Activated B cell treated with CpG ODN at 0.5 μM for 24 hours (primary cell): ENCODE measurements at regions of chr6 and their contacts with region 1.

Region 1: DNA sequence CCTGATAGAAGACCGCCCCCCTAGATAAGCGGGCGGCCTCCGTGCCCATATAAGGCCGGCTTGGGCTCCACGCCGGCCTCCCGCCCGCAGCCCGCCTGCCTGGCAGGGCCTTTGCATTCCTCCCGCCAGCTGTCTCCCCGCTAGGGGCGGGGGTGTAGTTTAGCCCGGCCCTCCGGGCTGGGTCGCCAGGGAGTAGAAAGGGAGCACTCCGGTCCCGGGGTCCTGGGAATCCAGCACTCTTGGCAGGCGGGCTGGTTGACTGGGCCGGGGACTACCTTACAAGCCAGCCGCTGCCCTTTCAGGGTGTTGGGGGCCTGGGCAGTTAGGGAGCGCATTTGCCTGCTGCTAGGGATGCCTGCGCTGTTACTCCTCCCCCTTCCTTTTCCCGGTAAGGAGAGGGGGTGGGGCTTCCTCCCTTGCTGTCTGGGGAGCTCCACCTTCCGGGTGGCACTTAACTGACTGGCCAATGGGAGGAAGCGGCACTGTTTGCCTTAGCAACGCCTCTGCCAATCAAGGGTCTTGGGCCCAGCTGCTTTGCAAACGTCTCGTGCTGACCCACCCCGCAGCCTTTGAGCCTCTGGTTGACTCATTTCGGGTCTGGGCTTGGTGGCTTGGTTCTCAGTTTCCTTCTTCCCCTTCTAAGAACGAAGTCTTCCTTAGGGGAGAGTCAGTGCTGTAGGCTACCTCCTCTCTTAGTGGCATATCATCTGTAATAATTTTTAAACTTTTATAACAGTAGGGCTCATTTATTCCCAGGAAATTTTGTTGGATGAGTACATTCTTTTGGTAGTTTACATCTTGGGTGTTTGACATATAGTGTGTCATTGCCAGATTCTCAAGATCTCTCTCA is 3.4 kb downstream of the SRF start:
- DNase-seq: peak; percentile 77
- ATAC-seq: peak; percentile 71
- H3K4me3 Mint-ChIP-seq: peak overlapping the region; percentile 73
- H3K27ac Mint-ChIP-seq: peak overlapping the region; percentile 90
- H3K4me1 Mint-ChIP-seq: peaks cover 48% of the 10 kb centered on the region
- H3K27me3 Mint-ChIP-seq: no peaks in the 10 kb centered on the region
- CTCF ChIP-seq: no peak

Region 2: GRCh38 chr6:42782622-42783176 is 391.8 kb before region 1 on chr6:
- CTCF ChIA-PET with region 1: no interaction called
- POLR2A ChIA-PET with region 1: no interaction called
- intact Hi-C with region 1: loop called (anchors 5 kb)
- DNase-seq: peak; percentile 62
- ATAC-seq: peak; percentile 40
- H3K4me3 Mint-ChIP-seq: peak overlapping the region; percentile 97
- H3K27ac Mint-ChIP-seq: peak overlapping the region; percentile 100
- H3K4me1 Mint-ChIP-seq: peaks cover 36% of the 10 kb centered on the region
- H3K27me3 Mint-ChIP-seq: no peaks in the 10 kb centered on the region
- CTCF ChIP-seq: no peak

Region 3: GRCh38 chr6:43013843-43014433 is 160.6 kb before region 1 on chr6 and contains the starts of genes KLHDC3 and MEA1:
- CTCF ChIA-PET with region 1: no interaction called
- POLR2A ChIA-PET with region 1: interaction called, 12 read pairs
- intact Hi-C with region 1: loop called (anchors 2 kb)
- DNase-seq: peak; percentile 94
- ATAC-seq: peak; percentile 93
- H3K4me3 Mint-ChIP-seq: peak within 1 kb of the TSS; percentile 97
- H3K27ac Mint-ChIP-seq: peak within 1 kb of the TSS; percentile 89
- H3K4me1 Mint-ChIP-seq: peaks cover 51% of the 10 kb centered on the region
- H3K27me3 Mint-ChIP-seq: no peaks in the 10 kb centered on the region
- CTCF ChIP-seq: no peak
- total RNA-seq, gene KLHDC3: 36.4 and 36.7 TPM in 2 replicates
- total RNA-seq, gene MEA1: 44.4 and 48.3 TPM in 2 replicates

Region 4: DNA sequence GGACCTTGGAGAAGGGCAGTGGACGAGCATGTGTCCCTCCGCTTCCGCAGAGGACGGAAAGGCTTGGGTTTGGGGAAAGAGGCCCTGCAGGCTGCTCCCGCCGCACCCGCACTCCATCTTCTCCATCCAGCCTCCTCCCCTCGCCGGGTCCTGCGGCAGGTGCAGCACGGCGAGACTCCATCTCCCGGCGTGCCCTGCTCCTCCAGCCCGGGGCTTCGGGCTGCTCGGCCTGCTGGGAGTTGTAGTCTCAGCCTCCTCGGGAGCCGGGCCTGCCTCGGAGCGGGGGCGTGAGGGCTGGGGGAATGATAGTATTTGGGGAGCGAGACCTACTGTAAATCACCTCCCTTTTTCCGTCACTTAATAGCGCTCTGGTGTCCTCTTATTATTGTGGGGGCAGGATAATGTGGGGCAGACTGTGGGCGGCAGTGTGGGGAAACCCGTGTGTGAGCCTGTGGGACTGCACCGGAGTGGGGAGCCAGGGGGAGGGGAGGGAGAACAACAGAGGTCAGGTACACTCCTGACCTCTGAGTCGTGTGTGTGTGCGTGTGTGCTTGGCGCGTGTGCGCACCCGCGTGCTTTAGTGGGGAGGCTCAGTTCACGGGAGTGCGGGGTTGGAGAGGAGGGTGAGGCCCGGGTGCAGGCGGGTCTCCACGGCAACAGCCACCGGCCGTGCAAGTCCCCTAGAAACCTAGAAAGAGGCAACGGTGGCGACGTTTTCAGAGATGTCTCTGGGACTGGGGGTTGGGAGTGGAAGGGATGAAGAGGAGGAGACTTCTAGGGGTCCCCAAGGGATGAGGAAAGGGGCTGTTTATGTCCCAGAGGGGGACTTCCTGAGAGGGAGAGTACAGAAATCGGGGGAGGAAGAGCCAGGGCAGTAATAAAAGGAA is 72.9 kb after region 1 on chr6:
- CTCF ChIA-PET with region 1: no interaction called
- POLR2A ChIA-PET with region 1: interaction called, 8 read pairs
- intact Hi-C with region 1: loop called (anchors 1 kb)
- DNase-seq: peak; percentile 73
- ATAC-seq: peak; percentile 96
- H3K4me3 Mint-ChIP-seq: no peak overlapping the region
- H3K27ac Mint-ChIP-seq: peak overlapping the region; percentile 76
- H3K4me1 Mint-ChIP-seq: peaks cover 29% of the 10 kb centered on the region
- H3K27me3 Mint-ChIP-seq: peaks cover 17% of the 10 kb centered on the region
- CTCF ChIP-seq: no peak

Region 5: DNA sequence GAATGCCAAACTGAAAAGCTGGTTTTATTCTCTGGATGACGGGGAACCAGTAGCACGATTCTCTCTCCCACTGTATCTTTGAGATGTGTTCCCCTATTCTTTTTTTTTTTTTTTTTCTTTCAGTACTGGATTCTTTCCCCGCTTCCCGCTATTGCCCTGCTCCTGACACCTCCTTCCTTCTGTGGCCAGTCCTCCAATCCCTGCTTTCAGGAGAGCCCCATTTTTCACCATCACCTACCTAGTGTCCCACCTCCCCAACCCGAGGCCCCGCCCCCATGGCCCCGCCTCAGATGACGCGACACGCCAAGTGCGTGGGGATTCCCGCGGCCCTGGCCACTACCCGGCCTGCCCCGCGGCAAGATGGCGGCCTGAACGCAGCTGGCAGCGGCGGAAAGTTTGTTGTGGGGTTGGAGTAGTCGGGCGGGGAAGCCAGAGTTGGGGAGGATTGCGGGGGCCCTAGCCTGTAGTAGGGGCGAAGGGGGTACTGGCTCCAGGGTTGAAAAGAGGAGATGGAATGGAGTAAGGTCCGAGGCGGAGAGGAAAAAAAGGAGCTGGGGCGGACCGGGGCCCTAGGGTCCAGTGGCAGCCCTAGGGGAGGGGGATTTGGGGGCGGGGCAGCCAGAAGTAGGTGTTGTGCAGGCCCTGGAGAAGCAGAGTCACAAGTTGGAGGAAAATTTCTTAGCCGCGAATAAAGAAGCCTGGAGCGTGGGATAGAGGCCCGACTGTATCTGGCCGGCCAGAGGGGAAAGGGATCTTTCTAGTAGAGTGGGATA is 302.9 kb after region 1 on chr6 and contains the start of gene TJAP1:
- CTCF ChIA-PET with region 1: no interaction called
- POLR2A ChIA-PET with region 1: interaction called, 6 read pairs
- intact Hi-C with region 1: loop called (anchors 2 kb)
- DNase-seq: peak; percentile 98
- ATAC-seq: peak; percentile 100
- H3K4me3 Mint-ChIP-seq: peak within 1 kb of the TSS; percentile 96
- H3K27ac Mint-ChIP-seq: peak within 1 kb of the TSS; percentile 94
- H3K4me1 Mint-ChIP-seq: peaks cover 41% of the 10 kb centered on the region
- H3K27me3 Mint-ChIP-seq: no peaks in the 10 kb centered on the region
- CTCF ChIP-seq: no peak
- total RNA-seq, gene TJAP1: 36.0 and 45.3 TPM in 2 replicates

Region 6: GRCh38 chr6:43629505-43630300 is 455.2 kb after region 1 on chr6:
- CTCF ChIA-PET with region 1: no interaction called
- POLR2A ChIA-PET with region 1: interaction called, 3 read pairs
- intact Hi-C with region 1: loop called (anchors 1 kb)
- DNase-seq: peak; percentile 87
- ATAC-seq: peak; percentile 70
- H3K4me3 Mint-ChIP-seq: peak overlapping the region; percentile 98
- H3K27ac Mint-ChIP-seq: peak overlapping the region; percentile 99
- H3K4me1 Mint-ChIP-seq: peaks cover 41% of the 10 kb centered on the region
- H3K27me3 Mint-ChIP-seq: no peaks in the 10 kb centered on the region
- CTCF ChIP-seq: no peak